Panc1 (cell line): ENCODE measurements at regions of chr1 and their contacts with region 1.

Region 1: GRCh38 chr1:74420467-74420866 is 91.9 kb downstream of the LRRC53 start:
- DNase-seq: no peak
- ATAC-seq: no peak
- H3K4me3 ChIP-seq: no peak overlapping the region
- H3K27ac ChIP-seq: no peak overlapping the region
- H3K4me1 ChIP-seq: no peaks in the 10 kb centered on the region
- H3K27me3 ChIP-seq: no peaks in the 10 kb centered on the region
- CTCF ChIP-seq: no peak

Region 2: DNA sequence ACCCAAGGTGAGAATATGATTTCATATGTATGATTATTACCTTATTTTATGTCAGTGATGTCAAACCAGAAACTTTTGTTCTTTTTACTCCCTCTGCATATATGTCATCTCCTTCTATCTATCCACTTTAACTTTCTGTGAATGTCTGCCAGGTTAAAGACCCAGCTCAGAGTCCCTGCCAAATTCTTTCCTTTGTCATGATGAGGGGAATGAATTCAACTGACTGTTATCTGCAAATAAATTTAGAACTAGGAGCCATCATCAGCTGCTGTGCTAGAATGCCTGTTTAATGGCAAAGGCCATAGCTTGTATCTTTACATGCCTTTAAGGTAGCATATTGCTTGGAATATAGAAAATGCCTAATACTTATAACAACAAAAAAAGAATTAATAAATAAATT is 1322.5 kb before region 1 on chr1:
- CTCF ChIA-PET with region 1: interaction called, 14 read pairs
- POLR2A ChIA-PET with region 1: no interaction called
- in situ Hi-C with region 1: no loop called
- intact Hi-C with region 1: no loop called
- DNase-seq: no peak
- ATAC-seq: no peak
- H3K4me3 ChIP-seq: no peak overlapping the region
- H3K27ac ChIP-seq: no peak overlapping the region
- H3K4me1 ChIP-seq: no peaks in the 10 kb centered on the region
- H3K27me3 ChIP-seq: no peaks in the 10 kb centered on the region
- CTCF ChIP-seq: no peak

Region 3: DNA sequence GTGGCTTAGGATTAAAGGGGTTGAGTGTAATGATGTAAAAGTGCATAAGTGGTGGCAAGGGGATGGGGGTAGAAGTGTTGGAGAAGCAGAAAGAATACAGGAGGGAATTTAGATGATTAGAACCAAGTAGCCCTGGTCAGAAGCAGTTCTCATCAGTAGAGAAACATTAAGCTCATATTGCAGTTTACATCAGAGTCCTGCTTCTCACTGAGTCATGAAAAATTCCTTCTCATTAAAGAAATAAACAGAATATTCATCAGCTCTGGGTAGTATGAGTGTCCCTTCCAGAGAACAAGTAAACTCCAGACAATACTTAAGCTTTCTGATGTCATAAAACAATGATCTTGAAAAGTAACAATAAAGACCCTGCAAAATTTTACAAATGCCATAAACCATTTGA is 259.0 kb before region 1 on chr1:
- CTCF ChIA-PET with region 1: no interaction called
- POLR2A ChIA-PET with region 1: no interaction called
- in situ Hi-C with region 1: no loop called
- intact Hi-C with region 1: no loop called
- DNase-seq: no peak
- ATAC-seq: no peak
- H3K4me3 ChIP-seq: no peak overlapping the region
- H3K27ac ChIP-seq: no peak overlapping the region
- H3K4me1 ChIP-seq: no peaks in the 10 kb centered on the region
- H3K27me3 ChIP-seq: no peaks in the 10 kb centered on the region
- CTCF ChIP-seq: no peak